MCF 10A (cell line): ENCODE measurements at regions of chr10 and their contacts with region 1.

Region 1: GRCh38 chr10:122051251-122051996 is 62.5 kb downstream of the TACC2 start:
- DNase-seq: peak; percentile 89
- H3K4me3 Mint-ChIP-seq: no peak overlapping the region
- H3K27ac Mint-ChIP-seq: no peak overlapping the region
- H3K4me1 Mint-ChIP-seq: peaks cover 25% of the 10 kb centered on the region
- H3K27me3 Mint-ChIP-seq: no peaks in the 10 kb centered on the region
- CTCF ChIP-seq: peak; percentile 56

Region 2: GRCh38 chr10:121974535-121975294 is 76.7 kb before region 1 on chr10 and contains the start of gene NSMCE4A:
- CTCF ChIA-PET with region 1: interaction called, 5 read pairs
- POLR2A ChIA-PET with region 1: interaction called, 5 read pairs
- intact Hi-C with region 1: loop called (anchors 1 kb)
- DNase-seq: peak; percentile 63
- H3K4me3 Mint-ChIP-seq: peak within 1 kb of the TSS; percentile 77
- H3K27ac Mint-ChIP-seq: peak within 1 kb of the TSS; percentile 16
- H3K4me1 Mint-ChIP-seq: peaks cover 13% of the 10 kb centered on the region
- H3K27me3 Mint-ChIP-seq: no peaks in the 10 kb centered on the region
- CTCF ChIP-seq: peak; percentile 59
- total RNA-seq, gene NSMCE4A: 24.5 and 30.2 TPM in 2 replicates

Region 3: DNA sequence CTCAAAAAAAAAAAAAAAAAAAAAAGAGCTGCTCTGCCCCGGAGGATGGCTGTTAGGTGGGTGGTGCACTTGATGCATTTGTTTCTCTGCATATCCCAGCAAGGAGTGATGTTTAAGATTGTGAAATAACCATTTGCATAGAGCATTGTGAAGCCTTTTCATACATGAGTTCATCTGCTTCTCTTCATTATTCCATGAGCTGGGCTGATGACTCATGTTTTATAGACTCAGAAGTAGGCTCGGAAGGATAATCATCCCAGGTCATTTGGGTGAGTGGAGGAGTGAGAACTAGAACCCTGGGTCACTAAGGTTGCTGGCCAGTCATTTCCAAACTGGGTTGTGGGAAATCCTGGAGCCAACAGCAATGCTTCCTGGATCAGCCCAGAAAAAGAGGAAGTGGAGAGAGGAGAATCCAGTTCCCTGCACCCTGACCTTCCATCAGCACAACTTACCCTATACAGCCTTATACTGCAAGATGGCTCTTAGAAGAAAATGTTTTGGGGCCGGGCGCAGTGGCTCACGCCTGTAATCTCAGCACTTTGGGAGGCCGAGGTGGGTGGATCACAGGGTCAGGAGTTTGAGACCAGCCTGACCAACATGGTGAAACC is 17.2 kb before region 1 on chr10:
- CTCF ChIA-PET with region 1: interaction called, 14 read pairs
- POLR2A ChIA-PET with region 1: no interaction called
- intact Hi-C with region 1: no loop called
- DNase-seq: peak; percentile 76
- H3K4me3 Mint-ChIP-seq: no peak overlapping the region
- H3K27ac Mint-ChIP-seq: no peak overlapping the region
- H3K4me1 Mint-ChIP-seq: peaks cover 5% of the 10 kb centered on the region
- H3K27me3 Mint-ChIP-seq: no peaks in the 10 kb centered on the region
- CTCF ChIP-seq: no peak

Region 4: GRCh38 chr10:122062831-122063674 is 11.6 kb after region 1 on chr10:
- CTCF ChIA-PET with region 1: interaction called, 22 read pairs
- POLR2A ChIA-PET with region 1: interaction called, 37 read pairs
- intact Hi-C with region 1: no loop called
- DNase-seq: peak; percentile 97
- H3K4me3 Mint-ChIP-seq: peak overlapping the region; percentile 20
- H3K27ac Mint-ChIP-seq: peak overlapping the region; percentile 98
- H3K4me1 Mint-ChIP-seq: peaks cover 12% of the 10 kb centered on the region
- H3K27me3 Mint-ChIP-seq: no peaks in the 10 kb centered on the region
- CTCF ChIP-seq: no peak

Region 5: DNA sequence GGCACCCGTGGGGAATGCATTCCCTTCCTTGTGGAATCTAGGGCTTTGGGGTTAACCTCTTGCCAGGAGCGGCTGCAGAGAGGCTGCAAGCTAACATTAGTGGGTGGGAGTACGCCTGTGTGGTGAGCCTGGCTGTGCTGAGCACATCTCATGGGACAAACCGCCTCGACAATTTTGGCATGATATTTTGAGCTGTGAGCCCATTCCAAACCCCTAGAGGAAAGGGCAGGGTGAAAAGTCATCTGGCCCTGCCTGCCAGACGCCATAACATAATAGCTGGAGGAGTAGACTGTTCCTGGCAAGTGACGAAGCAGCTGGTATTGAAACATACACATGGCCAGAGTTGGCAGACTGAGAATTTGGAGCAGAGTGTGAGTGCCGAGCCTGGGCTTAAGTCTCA is 47.5 kb after region 1 on chr10:
- CTCF ChIA-PET with region 1: interaction called, 11 read pairs
- POLR2A ChIA-PET with region 1: interaction called, 4 read pairs
- intact Hi-C with region 1: no loop called
- DNase-seq: no peak
- H3K4me3 Mint-ChIP-seq: no peak overlapping the region
- H3K27ac Mint-ChIP-seq: no peak overlapping the region
- H3K4me1 Mint-ChIP-seq: peaks cover 16% of the 10 kb centered on the region
- H3K27me3 Mint-ChIP-seq: no peaks in the 10 kb centered on the region
- CTCF ChIP-seq: no peak

Region 6: DNA sequence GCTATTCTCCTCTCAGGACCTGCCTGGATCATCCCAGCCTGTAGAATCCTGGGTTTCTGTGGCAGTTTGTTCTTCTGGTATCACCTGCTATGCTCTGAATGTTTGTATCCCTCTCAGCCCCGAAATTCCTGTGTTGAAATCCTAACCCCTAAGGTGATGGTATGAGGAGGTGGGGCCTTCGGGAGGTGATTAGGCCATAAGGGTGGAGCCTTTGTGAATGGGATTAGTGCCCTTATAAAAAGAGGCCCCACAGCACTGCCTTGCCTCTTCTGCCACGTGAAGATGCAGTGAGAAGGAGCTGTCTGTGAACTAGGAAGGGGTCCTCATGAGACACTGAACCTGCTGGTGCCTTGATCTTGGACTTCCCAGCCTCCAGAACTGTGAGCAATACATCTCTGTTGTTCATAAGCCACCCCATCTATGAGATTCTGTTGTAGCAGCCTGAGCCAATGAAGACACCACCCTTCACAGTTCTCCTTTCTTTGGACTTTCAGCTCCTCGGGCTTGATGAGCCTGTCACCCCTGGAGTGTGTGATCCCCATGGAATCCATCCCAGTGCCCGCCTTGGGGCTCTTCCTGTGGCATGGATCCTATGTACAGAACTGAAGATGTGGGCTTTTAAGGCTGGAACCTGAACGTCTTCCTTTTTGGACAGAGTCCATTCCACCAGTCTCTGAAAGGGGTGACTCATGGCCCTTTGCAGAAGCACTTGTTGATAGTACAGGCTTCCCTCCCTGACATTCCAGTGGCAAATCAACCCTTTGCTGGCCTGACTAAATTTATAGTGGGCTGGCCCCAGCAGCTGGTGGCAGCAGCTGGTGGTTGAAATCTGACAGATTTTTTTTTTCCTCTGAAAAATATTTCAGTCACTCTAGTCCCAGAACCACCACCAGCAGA is 75.6 kb after region 1 on chr10:
- CTCF ChIA-PET with region 1: interaction called, 3 read pairs
- POLR2A ChIA-PET with region 1: interaction called, 3 read pairs
- intact Hi-C with region 1: loop called (anchors 5 kb)
- DNase-seq: peak; percentile 92
- H3K4me3 Mint-ChIP-seq: peak overlapping the region; percentile 80
- H3K27ac Mint-ChIP-seq: peak overlapping the region; percentile 89
- H3K4me1 Mint-ChIP-seq: peaks cover 30% of the 10 kb centered on the region
- H3K27me3 Mint-ChIP-seq: no peaks in the 10 kb centered on the region
- CTCF ChIP-seq: no peak

Region 7: DNA sequence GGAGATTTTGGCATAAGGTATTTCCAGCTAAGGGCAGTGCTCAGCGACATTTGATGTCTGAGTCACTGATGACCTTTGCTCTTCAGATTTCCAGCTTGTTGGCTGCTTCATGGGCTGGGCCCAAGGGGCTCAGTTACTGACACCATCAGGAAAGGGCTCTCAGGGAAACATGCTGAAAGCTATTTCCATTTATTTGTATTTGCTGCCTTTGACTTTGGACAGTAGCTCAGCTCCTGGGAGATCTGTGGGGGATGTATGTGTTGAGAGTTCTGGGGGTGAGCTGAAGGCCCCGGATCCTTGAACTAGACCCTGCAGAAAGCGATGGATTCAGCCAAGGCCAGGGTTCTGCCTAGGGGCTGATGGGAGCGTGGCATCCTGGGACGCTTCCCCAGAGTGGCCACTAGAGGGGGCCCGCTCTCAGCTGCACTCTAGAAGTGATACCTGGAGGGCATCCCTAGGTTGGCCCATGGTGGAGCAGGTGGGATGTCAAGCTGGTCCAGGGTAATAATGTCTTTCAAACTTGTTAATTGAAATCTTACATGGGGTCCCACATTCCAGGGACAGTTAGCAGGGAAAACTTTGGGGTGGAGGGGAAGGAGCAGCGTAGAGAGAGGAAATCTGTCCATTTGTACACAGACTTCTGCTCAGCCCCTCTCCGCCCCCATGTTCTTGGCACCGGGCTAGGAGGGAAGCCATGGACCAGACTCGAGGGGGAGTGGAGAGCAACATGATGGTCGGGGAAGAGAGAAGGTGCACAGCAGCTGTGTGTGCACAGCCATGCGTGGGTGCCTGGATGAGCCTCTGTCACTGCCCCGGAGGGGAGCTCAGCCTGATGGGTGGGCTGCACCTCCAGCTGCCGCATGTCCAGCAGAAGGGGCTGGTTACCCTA is 216.7 kb after region 1 on chr10:
- CTCF ChIA-PET with region 1: interaction called, 3 read pairs
- POLR2A ChIA-PET with region 1: no interaction called
- intact Hi-C with region 1: loop called (anchors 10 kb)
- DNase-seq: peak; percentile 49
- H3K4me3 Mint-ChIP-seq: no peak overlapping the region
- H3K27ac Mint-ChIP-seq: no peak overlapping the region
- H3K4me1 Mint-ChIP-seq: peaks cover 32% of the 10 kb centered on the region
- H3K27me3 Mint-ChIP-seq: no peaks in the 10 kb centered on the region
- CTCF ChIP-seq: peak; percentile 82